Sigmoid colon (tissue), 7 donors: ENCODE measurements at regions of chr20 and their contacts with region 1.

Region 1: GRCh38 chr20:58236612-58237330 is 8.3 kb upstream of the ANKRD60 start:
- DNase-seq: peak; percentile 77
- H3K4me3 ChIP-seq: peak overlapping the region; percentile 15 to 51 (median 40)
- H3K27ac ChIP-seq: peak overlapping the region in 3 of 4 donors; percentile 10 to 38 (median 11)
- H3K4me1 ChIP-seq: peaks cover 0 to 11% (median 3%) of the 10 kb centered on the region in 4 donors
- H3K27me3 ChIP-seq: no peaks in the 10 kb centered on the region
- CTCF ChIP-seq: peak; percentile 81 to 95 (median 91)
- EP300 ChIP-seq: no peak
- POLR2A ChIP-seq: no peak

Region 2: GRCh38 chr20:58447511-58448391 is 211.0 kb after region 1 on chr20:
- intact Hi-C with region 1: loop called (anchors 2 kb)
- DNase-seq: no peak
- H3K4me3 ChIP-seq: no peak overlapping the region
- H3K27ac ChIP-seq: peak overlapping the region in 1 of 4 donors; percentile 7
- H3K4me1 ChIP-seq: peaks cover 0 to 39% (median 17%) of the 10 kb centered on the region in 4 donors
- H3K27me3 ChIP-seq: no peaks in the 10 kb centered on the region
- CTCF ChIP-seq: peak in 3 of 4 experiments; percentile 49 to 62 (median 59)
- EP300 ChIP-seq: no peak
- POLR2A ChIP-seq: no peak

Region 3: GRCh38 chr20:58669287-58670006 is 432.7 kb after region 1 on chr20:
- intact Hi-C with region 1: no loop called
- DNase-seq: no peak
- H3K4me3 ChIP-seq: no peak overlapping the region
- H3K27ac ChIP-seq: no peak overlapping the region
- H3K4me1 ChIP-seq: no peaks in the 10 kb centered on the region
- H3K27me3 ChIP-seq: no peaks in the 10 kb centered on the region
- CTCF ChIP-seq: no peak
- EP300 ChIP-seq: no peak
- POLR2A ChIP-seq: no peak

Region 4: DNA sequence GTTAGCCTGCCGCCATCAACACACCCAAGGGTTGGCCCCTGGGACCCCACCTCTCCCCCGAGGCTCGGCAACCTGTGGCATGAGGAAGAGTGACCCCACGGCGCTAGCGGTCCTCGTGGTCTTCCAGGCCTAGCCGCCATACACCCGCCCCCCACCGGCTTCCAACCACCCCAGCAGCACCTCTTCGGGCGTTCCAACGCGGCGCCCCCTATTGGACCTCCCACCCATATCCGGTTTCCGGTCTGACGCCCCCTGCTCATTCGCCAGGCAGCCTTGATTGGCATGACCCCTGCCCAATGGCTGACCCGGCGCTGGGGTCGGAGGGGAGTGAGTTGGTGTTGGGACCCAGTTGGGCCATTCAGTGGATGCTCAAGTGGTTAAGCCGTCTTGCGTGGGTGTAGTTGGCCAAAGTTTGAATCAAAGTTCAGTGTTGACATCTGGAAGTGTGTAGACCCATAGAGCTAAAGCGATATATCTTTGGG is 614.0 kb after region 1 on chr20 and contains the start of gene GNAS-AS1:
- intact Hi-C with region 1: loop called (anchors 5 kb)
- DNase-seq: peak; percentile 89
- H3K4me3 ChIP-seq: peak within 1 kb of the TSS; percentile 24 to 55 (median 47)
- H3K27ac ChIP-seq: no peak within 1 kb of the TSS
- H3K4me1 ChIP-seq: peaks cover 0 to 38% (median 30%) of the 10 kb centered on the region in 4 donors
- H3K27me3 ChIP-seq: peaks cover 11 to 57% (median 32%) of the 10 kb centered on the region in 3 donors
- CTCF ChIP-seq: no peak
- EP300 ChIP-seq: no peak
- POLR2A ChIP-seq: no peak
- total RNA-seq, gene GNAS-AS1: 0.33 to 0.36 TPM in 2 of 4 donors, not detected in the others

Region 5: GRCh38 chr20:59222253-59223181 is 985.7 kb after region 1 on chr20:
- intact Hi-C with region 1: loop called (anchors 10 kb)
- DNase-seq: peak; percentile 86
- H3K4me3 ChIP-seq: peak overlapping the region; percentile 45 to 69 (median 58)
- H3K27ac ChIP-seq: peak overlapping the region; percentile 38 to 65 (median 48)
- H3K4me1 ChIP-seq: peaks cover 0 to 24% (median 9%) of the 10 kb centered on the region in 4 donors
- H3K27me3 ChIP-seq: peaks cover 0 to 28% (median 4%) of the 10 kb centered on the region in 3 donors
- CTCF ChIP-seq: peak; percentile 55 to 93 (median 77)
- EP300 ChIP-seq: no peak
- POLR2A ChIP-seq: no peak